ENCODE measurements at regions of chr21 and their contacts with region 1.

Region 1: GRCh38 chr21:36209626-36210171 is 53.1 kb downstream of the DOP1B start:
- DNase-seq: peak in 1 of 2 experiments; percentile 70
- H3K4me3 ChIP-seq: no peak overlapping the region
- H3K27ac ChIP-seq: no peak overlapping the region
- H3K4me1 ChIP-seq: peaks cover 0 to 2% (median 0%) of the 10 kb centered on the region in 4 experiments; a peak in 1 of 7 replicates
- H3K27me3 ChIP-seq: no peaks in the 10 kb centered on the region
- CTCF ChIP-seq: peak in 2 of 3 experiments; percentile 72 to 78; a peak in 3 of 4 replicates
- EP300 ChIP-seq: no peak
- POLR2A ChIP-seq: no peak
- RAD21 ChIP-seq: peak; percentile 85 to 88

Region 2: DNA sequence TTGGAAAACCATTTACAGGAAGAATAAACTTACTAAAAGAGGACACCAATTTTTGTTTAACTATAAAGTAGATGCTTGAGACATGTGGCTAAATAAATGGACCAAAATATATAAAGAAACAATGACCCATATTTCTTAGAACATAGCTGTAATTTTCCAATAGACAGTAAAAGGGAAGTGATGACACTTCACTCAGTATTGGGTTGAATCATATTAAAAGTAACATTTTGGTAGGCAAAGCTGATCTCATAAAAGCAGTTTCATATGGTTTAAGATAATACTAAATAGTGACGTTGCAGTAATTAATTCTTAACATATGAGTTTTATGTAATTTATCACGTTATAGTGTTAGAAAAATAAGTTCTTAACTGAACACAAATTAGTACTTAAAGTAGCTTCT is 851.7 kb before region 1 on chr21:
- CTCF ChIA-PET with region 1: no interaction called
- POLR2A ChIA-PET with region 1: no interaction called
- DNase-seq: no peak
- H3K4me3 ChIP-seq: no peak overlapping the region
- H3K27ac ChIP-seq: no peak overlapping the region
- H3K4me1 ChIP-seq: no peaks in the 10 kb centered on the region
- H3K27me3 ChIP-seq: no peaks in the 10 kb centered on the region
- CTCF ChIP-seq: no peak
- EP300 ChIP-seq: no peak
- POLR2A ChIP-seq: no peak
- RAD21 ChIP-seq: no peak

Region 3: GRCh38 chr21:36141513-36141925 is 68.2 kb before region 1 on chr21:
- CTCF ChIA-PET with region 1: interaction called, 68 read pairs
- POLR2A ChIA-PET with region 1: no interaction called
- DNase-seq: peak; percentile 70 to 83
- H3K4me3 ChIP-seq: no peak overlapping the region
- H3K27ac ChIP-seq: no peak overlapping the region
- H3K4me1 ChIP-seq: peaks cover 0 to 6% (median under 1%) of the 10 kb centered on the region in 4 experiments; a peak in 3 of 7 replicates
- H3K27me3 ChIP-seq: peaks cover 0 to 4% (median 2%) of the 10 kb centered on the region in 4 experiments; a peak in 4 of 7 replicates
- CTCF ChIP-seq: peak; percentile 43 to 96 (median 93)
- EP300 ChIP-seq: no peak
- POLR2A ChIP-seq: no peak
- RAD21 ChIP-seq: peak; percentile 94 to 98

Region 4: DNA sequence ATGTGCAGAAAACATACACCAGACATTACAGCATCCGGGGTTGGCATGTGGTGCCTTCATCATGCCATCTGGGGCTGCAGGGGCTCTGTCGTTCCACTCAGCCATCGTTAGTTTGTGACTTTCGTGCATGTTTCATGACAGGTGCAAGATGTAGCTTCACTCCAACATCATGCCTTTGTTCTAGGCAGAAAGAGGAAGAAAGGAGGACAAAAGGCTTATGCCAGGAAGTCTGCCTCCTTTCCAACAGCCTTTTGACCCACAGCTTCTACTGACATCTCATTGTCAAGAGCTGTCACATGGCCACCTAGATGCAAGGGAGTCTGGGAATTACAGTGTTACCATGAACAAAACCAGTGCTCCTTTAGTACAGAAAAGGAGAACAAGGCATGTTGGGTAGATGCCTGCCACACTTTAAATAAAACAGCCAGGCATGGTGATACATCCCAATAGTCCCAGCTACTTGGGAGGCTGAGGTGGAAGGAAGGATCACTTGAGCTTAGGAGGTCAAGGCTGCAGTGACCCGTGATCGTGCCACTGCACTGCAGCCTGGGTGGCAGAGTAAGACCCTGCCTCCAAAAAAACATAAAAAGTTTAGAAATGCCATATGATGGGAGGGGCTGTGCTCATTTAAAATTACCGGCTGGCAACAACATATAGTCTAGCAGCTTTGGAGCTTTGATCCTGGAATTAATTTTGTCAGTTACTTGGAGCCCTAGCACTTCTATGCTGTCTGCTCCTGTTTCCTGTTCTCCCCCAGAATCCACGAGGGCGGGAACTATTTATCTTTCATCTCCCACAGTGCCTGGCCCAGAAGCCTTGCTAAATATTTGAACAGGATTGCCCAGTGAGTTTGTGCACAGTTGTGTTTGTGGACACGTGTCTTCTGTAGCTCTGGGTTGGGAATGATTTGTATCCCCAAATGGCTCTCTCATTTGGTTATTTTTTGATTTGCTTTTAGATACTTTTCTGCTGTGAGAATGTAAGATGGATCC is 45.7 kb before region 1 on chr21:
- CTCF ChIA-PET with region 1: interaction called, 16 read pairs
- POLR2A ChIA-PET with region 1: interaction called, 3 read pairs
- DNase-seq: no peak
- H3K4me3 ChIP-seq: no peak overlapping the region
- H3K27ac ChIP-seq: no peak overlapping the region
- H3K4me1 ChIP-seq: no peaks in the 10 kb centered on the region
- H3K27me3 ChIP-seq: no peaks in the 10 kb centered on the region
- CTCF ChIP-seq: no peak
- EP300 ChIP-seq: no peak
- POLR2A ChIP-seq: no peak
- RAD21 ChIP-seq: no peak

Region 5: GRCh38 chr21:36188081-36188681 is 21.5 kb before region 1 on chr21:
- CTCF ChIA-PET with region 1: interaction called, 13 read pairs
- POLR2A ChIA-PET with region 1: no interaction called
- DNase-seq: no peak
- H3K4me3 ChIP-seq: no peak overlapping the region
- H3K27ac ChIP-seq: no peak overlapping the region
- H3K4me1 ChIP-seq: peaks cover 0 to 3% (median 0%) of the 10 kb centered on the region in 4 experiments; a peak in 2 of 7 replicates
- H3K27me3 ChIP-seq: no peaks in the 10 kb centered on the region; a peak in 1 of 7 replicates
- CTCF ChIP-seq: no peak
- EP300 ChIP-seq: no peak
- POLR2A ChIP-seq: no peak
- RAD21 ChIP-seq: no peak

Region 6: DNA sequence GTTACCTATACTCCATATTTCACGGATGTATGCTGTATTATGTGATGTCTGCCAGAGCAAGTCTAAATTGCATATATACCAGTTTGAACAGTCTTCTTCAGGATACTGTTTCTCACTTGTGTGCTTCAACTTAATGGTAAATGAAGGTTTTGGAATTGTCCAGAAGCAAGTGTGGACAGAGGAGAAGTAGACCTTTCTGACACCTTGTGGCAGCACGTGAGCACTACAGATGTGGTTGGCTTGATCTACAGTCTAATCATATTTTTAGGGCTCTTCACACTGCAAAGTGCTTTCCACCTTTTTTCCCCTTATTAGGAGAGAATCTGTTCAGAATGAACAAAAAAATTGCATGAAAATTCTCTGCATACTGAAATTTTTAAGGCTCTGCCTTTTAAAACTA is 121.2 kb after region 1 on chr21:
- CTCF ChIA-PET with region 1: interaction called, 11 read pairs
- POLR2A ChIA-PET with region 1: no interaction called
- DNase-seq: no peak
- H3K4me3 ChIP-seq: no peak overlapping the region
- H3K27ac ChIP-seq: no peak overlapping the region
- H3K4me1 ChIP-seq: no peaks in the 10 kb centered on the region
- H3K27me3 ChIP-seq: no peaks in the 10 kb centered on the region
- CTCF ChIP-seq: peak in 2 of 3 experiments; percentile 66 to 81; a peak in 3 of 4 replicates
- EP300 ChIP-seq: no peak
- POLR2A ChIP-seq: no peak
- RAD21 ChIP-seq: peak; percentile 76 to 77

Region 7: GRCh38 chr21:36379251-36379650 is 169.6 kb after region 1 on chr21:
- CTCF ChIA-PET with region 1: no interaction called
- POLR2A ChIA-PET with region 1: no interaction called
- DNase-seq: no peak
- H3K4me3 ChIP-seq: no peak overlapping the region
- H3K27ac ChIP-seq: no peak overlapping the region
- H3K4me1 ChIP-seq: 0 out of 7 replicates have a peak, but pooled peaks cover 0 to 3% (median 0%) of the 10 kb centered on the region in 4 experiments
- H3K27me3 ChIP-seq: no peaks in the 10 kb centered on the region
- CTCF ChIP-seq: no peak
- EP300 ChIP-seq: no peak
- POLR2A ChIP-seq: no peak
- RAD21 ChIP-seq: no peak